Heart left ventricle (tissue), 16 donors: ENCODE measurements at regions of chr4 and their contacts with region 1.

Region 1: DNA sequence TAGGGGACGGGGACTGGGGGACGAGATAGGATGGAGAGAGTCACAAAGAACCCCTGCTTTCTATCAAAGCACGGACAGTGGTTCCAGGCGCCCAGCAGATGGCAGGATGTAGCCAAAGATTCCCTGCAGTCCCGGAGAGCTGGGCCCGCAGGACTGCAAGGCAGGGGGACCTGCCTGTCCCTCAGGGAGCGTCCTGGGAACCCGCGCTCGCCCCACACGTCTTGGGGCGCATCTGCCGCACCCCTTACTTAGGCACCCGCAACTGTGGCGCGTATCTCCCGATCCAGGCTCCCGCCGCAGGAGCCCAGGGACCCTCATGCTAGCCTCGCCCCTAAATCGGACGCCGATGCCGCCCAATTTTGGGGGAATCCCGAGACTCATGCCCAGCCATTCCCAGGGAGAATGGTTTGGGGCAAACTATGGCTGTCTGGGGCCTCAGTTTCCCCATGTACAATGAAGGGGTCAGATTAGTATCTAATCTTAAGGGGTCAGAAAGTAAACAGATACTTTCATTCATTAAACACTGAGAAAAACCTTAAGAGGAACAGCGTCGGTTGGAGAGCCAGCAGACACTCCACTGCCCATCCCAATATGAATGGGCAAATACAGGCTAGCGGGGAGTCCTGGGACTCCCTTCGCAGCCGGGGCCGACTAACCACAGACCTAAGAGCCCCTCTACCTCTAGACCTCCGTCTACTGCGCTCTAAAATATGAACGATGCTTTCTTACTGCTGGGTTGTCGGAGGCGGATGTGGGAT is 581 bp upstream of the STK32B start:
- DNase-seq: peak; percentile 62 to 86 (median 71)
- ATAC-seq: peak; percentile 39 to 92 (median 88)
- H3K4me3 ChIP-seq: peak overlapping the region; percentile 25 to 66 (median 56)
- H3K27ac ChIP-seq: peak overlapping the region in 1 of 12 donors; percentile 46
- H3K4me1 ChIP-seq: peaks cover 0 to 25% (median 10%) of the 10 kb centered on the region in 12 donors
- H3K27me3 ChIP-seq: peaks cover 3 to 33% (median 18%) of the 10 kb centered on the region in 9 donors
- CTCF ChIP-seq: peak; percentile 46 to 75 (median 66)
- POLR2A ChIP-seq: no peak

Region 2: GRCh38 chr4:5142726-5143125 is 92.0 kb after region 1 on chr4:
- intact Hi-C with region 1: loop called in 4 of 10 experiments (anchors 5 to 10 kb)
- DNase-seq: peak in 1 of 5 donors; percentile 24
- ATAC-seq: no peak
- H3K4me3 ChIP-seq: no peak overlapping the region
- H3K27ac ChIP-seq: no peak overlapping the region
- H3K4me1 ChIP-seq: no peaks in the 10 kb centered on the region
- H3K27me3 ChIP-seq: peaks cover 0 to 4% (median 0%) of the 10 kb centered on the region in 9 donors
- CTCF ChIP-seq: peak in 10 of 12 donors; percentile 25 to 55 (median 40)
- POLR2A ChIP-seq: no peak

Region 3: DNA sequence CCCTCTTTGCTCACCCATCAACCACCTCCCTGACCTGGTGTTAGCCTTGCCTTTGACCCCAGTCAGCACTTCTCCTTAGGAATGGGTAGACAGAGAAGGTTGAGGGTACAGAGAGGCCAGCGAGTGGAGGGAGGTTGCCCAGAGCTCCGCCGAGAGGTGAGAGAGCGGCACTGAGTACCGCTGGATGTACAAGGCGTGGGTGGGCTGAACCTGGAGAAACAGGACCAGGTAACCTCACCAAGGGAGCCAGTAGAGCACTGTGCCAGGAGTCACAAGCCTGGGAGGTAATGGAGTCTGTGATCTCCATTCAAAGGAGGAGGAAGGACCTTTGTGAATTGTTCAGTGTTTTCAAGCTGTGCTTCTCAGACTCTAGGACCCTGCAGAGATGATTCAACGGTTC is 401.5 kb after region 1 on chr4:
- intact Hi-C with region 1: loop called in 1 of 10 experiments (anchors 10 kb)
- DNase-seq: no peak
- ATAC-seq: no peak
- H3K4me3 ChIP-seq: no peak overlapping the region
- H3K27ac ChIP-seq: no peak overlapping the region
- H3K4me1 ChIP-seq: no peaks in the 10 kb centered on the region
- H3K27me3 ChIP-seq: no peaks in the 10 kb centered on the region
- CTCF ChIP-seq: no peak
- POLR2A ChIP-seq: no peak

Region 4: GRCh38 chr4:5460116-5460801 is 409.6 kb after region 1 on chr4:
- intact Hi-C with region 1: loop called in 2 of 10 experiments (anchors 5 to 10 kb)
- DNase-seq: peak in 2 of 5 donors; percentile 30 to 35
- ATAC-seq: no peak
- H3K4me3 ChIP-seq: no peak overlapping the region
- H3K27ac ChIP-seq: no peak overlapping the region
- H3K4me1 ChIP-seq: no peaks in the 10 kb centered on the region
- H3K27me3 ChIP-seq: peaks cover 0 to 4% (median 0%) of the 10 kb centered on the region in 9 donors
- CTCF ChIP-seq: peak; percentile 16 to 54 (median 35)
- POLR2A ChIP-seq: no peak

Region 5: GRCh38 chr4:5791654-5792053 is 741.0 kb after region 1 on chr4:
- intact Hi-C with region 1: loop called in 4 of 10 experiments (anchors 1 to 10 kb)
- DNase-seq: no peak
- ATAC-seq: no peak
- H3K4me3 ChIP-seq: no peak overlapping the region
- H3K27ac ChIP-seq: no peak overlapping the region
- H3K4me1 ChIP-seq: no peaks in the 10 kb centered on the region
- H3K27me3 ChIP-seq: no peaks in the 10 kb centered on the region
- CTCF ChIP-seq: no peak
- POLR2A ChIP-seq: no peak

Region 6: DNA sequence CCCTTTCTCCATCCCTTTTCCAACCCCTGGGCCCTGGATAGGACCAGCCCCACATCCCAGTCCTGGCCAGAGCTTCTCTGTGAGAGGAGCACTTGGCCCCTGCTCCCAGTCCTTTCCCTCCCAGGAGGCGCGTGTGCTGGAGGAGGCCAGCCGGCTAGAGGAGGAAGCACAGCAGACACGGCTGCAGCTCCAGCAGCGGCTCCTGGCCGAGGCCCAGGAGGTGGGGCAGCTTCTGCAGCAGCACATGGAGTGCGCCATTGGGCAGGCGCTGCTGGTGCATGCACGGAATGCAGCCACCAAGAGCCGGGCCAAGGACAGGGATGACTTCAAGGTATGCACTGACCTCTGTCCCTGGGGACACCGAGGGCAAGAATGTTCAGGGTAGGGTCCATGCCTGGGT is 747.8 kb after region 1 on chr4:
- intact Hi-C with region 1: loop called in 3 of 10 experiments (anchors 5 to 10 kb)
- DNase-seq: peak; percentile 15 to 75 (median 46)
- ATAC-seq: peak; percentile 37 to 74 (median 70)
- H3K4me3 ChIP-seq: no peak overlapping the region
- H3K27ac ChIP-seq: no peak overlapping the region
- H3K4me1 ChIP-seq: peaks cover 0 to 3% (median 0%) of the 10 kb centered on the region in 12 donors
- H3K27me3 ChIP-seq: no peaks in the 10 kb centered on the region
- CTCF ChIP-seq: no peak
- POLR2A ChIP-seq: no peak

Region 7: DNA sequence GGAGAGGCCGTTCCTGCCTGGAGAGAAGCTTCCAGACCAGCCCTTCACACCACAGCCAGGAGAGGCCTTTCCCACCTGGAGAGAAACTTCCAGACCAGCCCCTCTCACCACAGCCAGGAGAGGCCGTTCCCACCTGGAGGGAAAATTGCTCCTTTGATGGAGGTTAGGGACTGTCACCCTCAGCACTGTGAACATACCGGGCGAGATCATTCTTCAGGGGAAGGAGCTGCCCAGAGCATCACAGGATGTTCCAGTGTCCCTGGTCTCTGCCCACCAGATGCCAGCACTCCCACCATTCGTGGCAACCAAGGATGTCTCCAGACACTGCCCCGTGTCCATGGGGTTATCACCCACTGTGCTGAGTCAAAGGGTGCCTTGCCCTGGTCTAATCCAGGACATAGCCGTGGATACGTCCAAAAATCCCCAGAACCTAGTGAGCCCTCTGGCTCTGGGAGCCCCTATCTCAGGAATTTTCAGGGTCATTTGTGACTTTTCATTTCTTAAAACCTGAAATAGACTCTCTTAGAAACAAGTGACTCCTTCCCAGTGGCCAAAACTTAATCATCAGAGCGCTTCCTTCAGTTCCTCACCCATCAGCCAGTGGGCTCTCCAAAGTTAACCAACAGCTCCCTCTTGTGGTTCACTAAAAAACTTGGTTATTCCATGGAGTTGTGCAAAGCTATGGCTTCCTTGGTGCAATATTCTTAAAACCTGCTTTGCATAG is 762.0 kb after region 1 on chr4:
- intact Hi-C with region 1: loop called in 6 of 10 experiments (anchors 2 to 5 kb)
- DNase-seq: peak in 1 of 5 donors; percentile 32
- ATAC-seq: peak; percentile 58 to 83 (median 65)
- H3K4me3 ChIP-seq: no peak overlapping the region
- H3K27ac ChIP-seq: no peak overlapping the region
- H3K4me1 ChIP-seq: no peaks in the 10 kb centered on the region
- H3K27me3 ChIP-seq: no peaks in the 10 kb centered on the region
- CTCF ChIP-seq: peak; percentile 56 to 76 (median 71)
- POLR2A ChIP-seq: no peak